Activated naive CD8-positive, alpha-beta T cell treated with anti-CD3 and anti-CD28 coated beads, Interleukin-2, amount 10 ng/mL, durations not matched to agents 7 days and 5 days (primary cell): ENCODE measurements at regions of chr17 and their contacts with region 1.

Region 1: DNA sequence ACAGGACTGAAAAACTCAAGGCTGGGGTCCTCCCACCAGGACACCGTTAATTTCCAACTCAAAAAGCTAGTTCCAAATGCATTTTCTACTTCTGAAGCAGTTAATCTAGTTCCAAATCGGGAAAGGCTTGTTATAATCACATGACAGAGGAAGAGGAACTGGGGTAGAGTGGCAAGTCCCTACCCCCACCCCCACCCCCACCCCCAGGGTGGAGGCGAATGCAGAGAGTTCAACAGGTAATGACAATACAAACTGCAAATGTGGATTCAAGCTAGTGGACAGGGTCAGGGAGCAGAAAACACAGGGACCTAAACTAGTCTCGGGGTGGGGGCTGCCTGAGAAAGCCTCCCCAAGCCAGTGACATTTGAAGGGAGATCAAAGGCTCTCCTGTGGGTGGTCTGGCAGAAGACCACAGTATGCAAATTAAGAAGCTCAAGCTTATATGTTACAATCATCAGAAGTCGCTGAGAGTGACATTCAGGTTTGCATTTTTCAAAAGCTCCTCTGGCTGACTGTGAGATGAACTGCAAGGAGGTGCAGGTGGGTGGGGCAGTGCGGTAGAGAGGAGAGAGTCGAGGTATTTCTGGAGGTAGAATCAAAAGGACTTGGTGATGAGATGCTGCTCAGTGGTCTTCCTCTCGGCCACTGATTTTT is 56.4 kb upstream of the SLC25A19 start:
- DNase-seq: peak; percentile 53
- ATAC-seq: peak; percentile 84
- H3K4me3 Mint-ChIP-seq: peak overlapping the region; percentile 84
- H3K27ac Mint-ChIP-seq: peak overlapping the region; percentile 92
- H3K4me1 Mint-ChIP-seq: peaks cover 71% of the 10 kb centered on the region
- H3K27me3 Mint-ChIP-seq: no peaks in the 10 kb centered on the region

Region 2: GRCh38 chr17:75250009-75250471 is 95.6 kb before region 1 on chr17:
- POLR2A ChIA-PET with region 1: no interaction called
- DNase-seq: peak; percentile 58
- ATAC-seq: peak; percentile 95
- H3K4me3 Mint-ChIP-seq: peak overlapping the region; percentile 78
- H3K27ac Mint-ChIP-seq: peak overlapping the region; percentile 92
- H3K4me1 Mint-ChIP-seq: peaks cover 23% of the 10 kb centered on the region
- H3K27me3 Mint-ChIP-seq: no peaks in the 10 kb centered on the region

Region 3: DNA sequence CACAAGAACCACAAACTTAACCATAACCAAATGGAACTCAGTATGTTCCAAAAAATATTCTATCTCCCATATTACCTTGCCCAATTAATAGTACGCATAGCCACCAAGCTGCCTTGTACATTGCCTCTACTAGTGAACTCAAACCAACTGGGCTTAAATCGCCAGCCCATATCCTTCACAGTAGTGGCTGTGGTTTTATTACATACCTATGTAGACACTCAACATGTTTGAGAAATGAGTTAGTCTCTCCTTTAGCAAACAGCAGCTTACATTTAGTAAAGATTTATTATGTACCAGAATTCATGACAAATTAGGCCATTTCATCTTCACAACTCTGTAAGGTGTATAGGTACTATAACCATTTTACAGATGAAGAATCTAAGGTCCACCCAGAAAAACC is 18.4 kb after region 1 on chr17:
- POLR2A ChIA-PET with region 1: interaction called, 10 read pairs
- DNase-seq: no peak
- ATAC-seq: no peak
- H3K4me3 Mint-ChIP-seq: no peak overlapping the region
- H3K27ac Mint-ChIP-seq: no peak overlapping the region
- H3K4me1 Mint-ChIP-seq: peaks cover 70% of the 10 kb centered on the region
- H3K27me3 Mint-ChIP-seq: no peaks in the 10 kb centered on the region